ENCODE measurements at regions of chr17 and their contacts with region 1.

Region 1: DNA sequence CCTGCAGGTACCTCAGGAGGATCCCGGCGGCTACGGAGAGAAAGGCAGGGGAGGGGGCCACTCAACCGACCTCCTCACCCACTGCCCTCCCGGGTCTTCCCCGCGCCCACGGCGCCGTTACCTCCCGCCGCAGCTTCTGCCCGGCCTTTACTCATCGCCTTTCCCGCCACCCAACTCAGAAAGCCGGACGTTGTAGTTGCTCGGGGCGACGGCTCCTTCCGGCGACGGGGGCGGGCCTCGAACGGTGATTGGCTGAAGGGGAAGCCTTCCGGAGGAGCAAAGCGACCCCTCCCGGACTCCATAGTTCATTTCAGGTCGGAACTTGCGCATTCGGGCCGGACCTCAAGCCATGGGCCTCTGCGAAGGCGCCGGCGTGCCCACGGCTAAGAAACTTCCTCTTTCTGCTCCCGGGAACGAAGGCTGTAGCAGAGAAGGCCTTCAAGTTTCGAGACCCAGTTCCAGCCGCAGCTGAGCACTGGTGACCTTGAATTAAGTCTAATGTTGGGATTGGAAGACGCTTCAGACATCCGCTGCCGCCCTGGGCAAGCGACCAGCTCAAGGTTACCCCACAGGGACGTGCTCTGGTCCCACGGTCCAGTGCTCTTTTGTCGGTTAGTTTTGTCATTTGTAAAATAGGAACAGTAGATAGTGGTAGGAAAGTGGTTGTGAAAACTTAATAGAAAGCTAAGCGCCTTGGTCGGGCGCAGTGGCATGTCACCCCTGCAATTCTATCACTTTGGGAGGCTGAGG is at the start of gene PSMC3IP:
- DNase-seq: peak; percentile 74 to 95 (median 85)
- ATAC-seq: peak; percentile 98
- H3K4me3 ChIP-seq: peak within 1 kb of the TSS; percentile 96
- H3K4me3 Mint-ChIP-seq: peak within 1 kb of the TSS; percentile 86 to 100 (median 96)
- H3K27ac ChIP-seq: peak within 1 kb of the TSS; percentile 87
- H3K27ac Mint-ChIP-seq: peak within 1 kb of the TSS; percentile 86 to 99 (median 96)
- H3K4me1 ChIP-seq: peaks cover 9 to 12% of the 10 kb centered on the region in 2 donors
- H3K4me1 Mint-ChIP-seq: peaks cover 17 to 53% (median 40%) of the 10 kb centered on the region in 7 donors
- H3K27me3 ChIP-seq: no peaks in the 10 kb centered on the region
- H3K27me3 Mint-ChIP-seq: no peaks in the 10 kb centered on the region
- total RNA-seq, gene PSMC3IP: 2.7 to 14.0 (median 5.2) TPM

Region 2: DNA sequence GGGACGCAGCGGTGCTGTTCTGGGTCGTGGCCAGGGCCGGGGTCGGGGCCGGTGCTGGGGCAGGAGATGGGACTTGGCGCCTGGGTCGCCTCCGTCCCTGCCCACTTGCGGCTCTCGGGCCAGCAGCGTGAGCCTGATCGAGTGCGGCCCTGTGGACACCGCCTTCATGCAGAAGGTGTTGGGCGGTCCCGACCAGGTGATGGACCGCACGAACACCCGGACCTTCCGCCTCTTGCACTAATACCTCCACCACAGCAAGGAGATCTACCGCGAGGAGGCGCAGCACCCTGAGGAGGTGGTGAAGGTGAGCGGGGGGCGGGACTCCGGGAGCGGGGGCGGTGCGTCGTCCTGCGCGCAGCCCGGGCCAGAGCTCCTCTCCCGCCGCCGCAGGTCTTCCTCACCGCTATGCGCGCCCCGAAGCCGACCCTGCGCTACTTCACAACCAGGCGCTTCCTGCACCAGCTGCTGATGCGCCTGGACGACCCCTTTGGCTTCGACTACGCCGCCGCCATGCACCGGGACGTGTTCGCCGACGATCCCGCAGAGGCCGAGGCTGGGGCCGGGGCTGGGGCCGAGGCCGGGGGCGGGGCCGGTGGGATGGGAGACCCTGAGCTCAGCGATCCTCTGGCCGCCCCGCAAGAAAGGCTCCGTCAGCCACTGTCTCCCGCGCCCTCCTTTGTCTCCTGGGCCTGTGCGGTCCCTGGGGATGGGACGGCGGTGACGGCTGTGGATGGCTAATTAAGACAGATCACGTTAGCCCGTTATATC is 29.5 kb before region 1 on chr17:
- CTCF ChIA-PET with region 1: interaction called, 5 read pairs
- POLR2A ChIA-PET with region 1: no interaction called
- intact Hi-C with region 1: loop called in 1 of 2 experiments (anchors 1 kb)
- DNase-seq: peak; percentile 54 to 75 (median 70)
- ATAC-seq: peak; percentile 94
- H3K4me3 ChIP-seq: peak overlapping the region; percentile 17
- H3K4me3 Mint-ChIP-seq: peak overlapping the region; percentile 7 to 75 (median 56)
- H3K27ac ChIP-seq: no peak overlapping the region
- H3K27ac Mint-ChIP-seq: peak overlapping the region in 2 of 9 donors; percentile 15 to 48
- H3K4me1 ChIP-seq: no peaks in the 10 kb centered on the region
- H3K4me1 Mint-ChIP-seq: peaks cover 4 to 22% (median 18%) of the 10 kb centered on the region in 7 donors
- H3K27me3 ChIP-seq: no peaks in the 10 kb centered on the region
- H3K27me3 Mint-ChIP-seq: no peaks in the 10 kb centered on the region

Region 3: DNA sequence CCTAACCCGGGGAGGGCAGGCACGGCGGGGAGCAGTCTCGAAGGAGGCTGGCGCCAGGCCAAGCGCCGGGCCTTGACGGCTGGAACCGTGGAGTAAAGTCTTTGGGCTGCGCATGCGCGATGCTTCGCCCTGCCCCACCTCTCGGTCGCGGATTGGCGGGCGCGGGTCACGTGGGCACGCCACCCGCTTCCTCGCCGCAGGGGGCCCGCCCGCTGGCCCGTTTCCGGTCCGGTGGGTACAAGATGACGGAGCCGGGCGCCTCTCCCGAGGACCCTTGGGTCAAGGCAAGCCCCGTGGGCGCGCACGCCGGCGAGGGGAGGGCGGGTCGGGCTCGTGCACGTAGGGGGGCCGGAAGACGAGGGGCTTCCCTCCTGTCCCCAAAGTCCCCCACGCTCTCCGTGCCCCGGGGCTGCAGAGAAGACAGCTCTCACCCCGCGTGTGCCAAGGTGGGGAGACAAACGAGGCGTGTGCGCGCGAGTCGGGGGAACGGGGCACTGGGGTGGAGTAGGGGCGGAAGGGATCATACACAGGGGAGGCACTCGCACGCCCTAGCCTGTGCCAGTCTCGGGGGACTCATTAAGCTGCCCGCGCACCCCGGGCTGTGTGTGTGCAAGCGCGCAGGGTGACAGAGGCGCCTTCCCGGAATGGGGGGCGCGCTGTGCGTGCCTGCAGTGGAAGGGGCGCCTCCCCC is 10.7 kb before region 1 on chr17 and contains the start of gene MLX:
- CTCF ChIA-PET with region 1: interaction called, 9 read pairs
- POLR2A ChIA-PET with region 1: interaction called, 27 read pairs
- intact Hi-C with region 1: loop called (anchors 1 kb)
- DNase-seq: peak; percentile 86 to 96 (median 90)
- ATAC-seq: peak; percentile 80
- H3K4me3 ChIP-seq: peak within 1 kb of the TSS; percentile 76
- H3K4me3 Mint-ChIP-seq: peak within 1 kb of the TSS; percentile 80 to 98 (median 95)
- H3K27ac ChIP-seq: peak within 1 kb of the TSS; percentile 92
- H3K27ac Mint-ChIP-seq: peak within 1 kb of the TSS; percentile 87 to 98 (median 95)
- H3K4me1 ChIP-seq: peaks cover 26 to 27% of the 10 kb centered on the region in 2 donors
- H3K4me1 Mint-ChIP-seq: peaks cover 26 to 57% (median 45%) of the 10 kb centered on the region in 7 donors
- H3K27me3 ChIP-seq: no peaks in the 10 kb centered on the region
- H3K27me3 Mint-ChIP-seq: no peaks in the 10 kb centered on the region
- total RNA-seq, gene MLX: 35.3 to 73.9 (median 65.1) TPM

Region 4: DNA sequence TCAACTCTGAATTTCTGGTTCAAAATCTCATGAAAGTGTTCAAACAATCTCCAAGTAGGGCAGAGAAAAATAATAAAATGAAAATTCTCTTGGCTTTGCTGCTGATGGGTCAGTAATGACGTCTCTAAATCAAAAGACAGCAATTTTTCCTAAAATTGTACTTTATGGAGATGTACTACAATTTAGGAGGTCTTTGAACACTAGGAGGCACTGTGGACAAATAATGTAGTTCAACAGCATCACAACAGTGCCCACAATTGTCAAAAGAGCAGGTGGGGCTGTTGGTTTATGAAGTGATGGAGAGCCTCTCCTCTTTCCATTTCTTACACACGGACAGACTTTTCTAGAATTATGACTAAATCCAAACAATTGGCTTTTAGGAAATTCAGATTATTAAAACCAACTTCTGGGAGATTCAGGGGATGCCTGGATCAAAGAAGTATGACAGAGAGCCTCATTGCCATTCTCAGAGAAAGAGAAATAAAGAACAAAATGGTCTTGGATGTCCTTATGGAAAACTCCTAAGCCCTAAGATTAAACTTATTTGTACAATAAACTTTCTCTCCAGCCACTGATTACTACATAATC is 143.4 kb after region 1 on chr17:
- CTCF ChIA-PET with region 1: interaction called, 3 read pairs
- POLR2A ChIA-PET with region 1: no interaction called
- intact Hi-C with region 1: loop called in 1 of 2 experiments (anchors 1 kb)
- DNase-seq: peak in 7 of 9 donors; percentile 43 to 74 (median 62)
- ATAC-seq: peak; percentile 87
- H3K4me3 ChIP-seq: no peak overlapping the region
- H3K4me3 Mint-ChIP-seq: no peak overlapping the region
- H3K27ac ChIP-seq: no peak overlapping the region
- H3K27ac Mint-ChIP-seq: no peak overlapping the region
- H3K4me1 ChIP-seq: no peaks in the 10 kb centered on the region
- H3K4me1 Mint-ChIP-seq: peaks cover 0 to 5% (median 4%) of the 10 kb centered on the region in 7 donors
- H3K27me3 ChIP-seq: no peaks in the 10 kb centered on the region
- H3K27me3 Mint-ChIP-seq: no peaks in the 10 kb centered on the region

Region 5: DNA sequence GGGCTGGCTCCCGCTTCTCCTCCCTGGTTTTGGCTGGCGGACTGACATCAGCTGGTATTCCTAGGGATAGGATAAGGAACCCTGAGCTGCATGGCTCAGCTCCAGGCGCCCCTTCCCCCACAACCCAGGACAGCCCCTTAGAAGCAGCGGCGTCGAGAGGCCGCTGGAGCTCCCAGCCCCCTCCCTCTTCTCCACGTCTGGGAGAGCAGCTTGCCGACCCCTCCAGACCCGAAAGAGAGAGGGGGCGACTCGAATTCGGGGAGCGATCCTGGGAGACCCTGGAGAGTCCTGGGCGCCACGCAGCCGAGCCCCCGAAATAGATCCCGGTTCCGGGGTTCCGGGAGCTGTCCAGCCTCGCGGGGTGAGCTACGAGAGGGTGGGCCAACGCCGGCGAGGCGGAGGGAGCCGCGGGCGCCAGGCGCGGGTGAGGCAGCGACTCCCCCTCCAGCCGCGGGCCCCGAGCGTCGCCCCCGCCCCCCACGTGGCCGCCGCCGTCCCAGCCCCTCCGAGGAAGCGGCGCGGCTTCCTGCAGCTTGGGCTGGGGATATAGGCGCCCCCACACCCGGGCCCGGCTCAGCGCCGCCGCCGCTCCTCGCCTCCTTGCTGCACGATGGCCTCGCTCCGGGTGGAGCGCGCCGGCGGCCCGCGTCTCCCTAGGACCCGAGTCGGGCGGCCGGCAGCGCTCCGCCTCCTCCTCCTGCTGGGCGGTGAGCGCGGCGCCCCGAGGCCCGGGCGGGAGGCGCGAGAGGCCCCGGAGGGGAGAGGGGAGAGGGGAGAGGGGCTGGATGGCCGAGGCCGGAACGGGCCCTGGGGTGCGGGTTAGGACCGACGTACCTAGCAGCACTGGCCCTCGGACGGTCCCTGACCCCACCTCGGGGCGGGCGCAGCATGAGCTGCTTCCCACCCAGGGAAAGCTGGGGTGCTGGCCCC is 183.2 kb after region 1 on chr17 and contains the start of gene RAMP2:
- CTCF ChIA-PET with region 1: interaction called, 17 read pairs
- POLR2A ChIA-PET with region 1: interaction called, 3 read pairs
- intact Hi-C with region 1: loop called in 1 of 2 experiments (anchors 1 kb)
- DNase-seq: peak in 1 of 9 donors; percentile 38
- ATAC-seq: peak; percentile 39
- H3K4me3 ChIP-seq: no peak within 1 kb of the TSS
- H3K4me3 Mint-ChIP-seq: peak within 1 kb of the TSS; percentile 21 to 73 (median 56)
- H3K27ac ChIP-seq: no peak within 1 kb of the TSS
- H3K27ac Mint-ChIP-seq: peak within 1 kb of the TSS in 1 of 9 donors; percentile 43
- H3K4me1 ChIP-seq: peaks cover 0 to 10% of the 10 kb centered on the region in 2 donors
- H3K4me1 Mint-ChIP-seq: peaks cover 0 to 13% (median 7%) of the 10 kb centered on the region in 7 donors
- H3K27me3 ChIP-seq: peaks cover 3 to 12% of the 10 kb centered on the region in 2 donors
- H3K27me3 Mint-ChIP-seq: peaks cover 59 to 69% (median 64%) of the 10 kb centered on the region in 5 donors
- total RNA-seq, gene RAMP2: not detected